GM12878 (cell line): ENCODE measurements at regions of chr18 and their contacts with region 1.

Region 1: GRCh38 chr18:45212181-45213039 is 402.9 kb upstream of the SLC14A2 start:
- DNase-seq: peak; percentile 58
- ATAC-seq: peak; percentile 100
- H3K4me3 ChIP-seq: no peak overlapping the region
- H3K27ac ChIP-seq: no peak overlapping the region
- H3K4me1 ChIP-seq: no peaks in the 10 kb centered on the region
- H3K27me3 ChIP-seq: no peaks in the 10 kb centered on the region
- CTCF ChIP-seq: peak; percentile 99 to 100 (median 99); a peak in 5 of 6 replicates
- EP300 ChIP-seq: no peak
- POLR2A ChIP-seq: no peak
- RAD21 ChIP-seq: peak; percentile 96

Region 2: DNA sequence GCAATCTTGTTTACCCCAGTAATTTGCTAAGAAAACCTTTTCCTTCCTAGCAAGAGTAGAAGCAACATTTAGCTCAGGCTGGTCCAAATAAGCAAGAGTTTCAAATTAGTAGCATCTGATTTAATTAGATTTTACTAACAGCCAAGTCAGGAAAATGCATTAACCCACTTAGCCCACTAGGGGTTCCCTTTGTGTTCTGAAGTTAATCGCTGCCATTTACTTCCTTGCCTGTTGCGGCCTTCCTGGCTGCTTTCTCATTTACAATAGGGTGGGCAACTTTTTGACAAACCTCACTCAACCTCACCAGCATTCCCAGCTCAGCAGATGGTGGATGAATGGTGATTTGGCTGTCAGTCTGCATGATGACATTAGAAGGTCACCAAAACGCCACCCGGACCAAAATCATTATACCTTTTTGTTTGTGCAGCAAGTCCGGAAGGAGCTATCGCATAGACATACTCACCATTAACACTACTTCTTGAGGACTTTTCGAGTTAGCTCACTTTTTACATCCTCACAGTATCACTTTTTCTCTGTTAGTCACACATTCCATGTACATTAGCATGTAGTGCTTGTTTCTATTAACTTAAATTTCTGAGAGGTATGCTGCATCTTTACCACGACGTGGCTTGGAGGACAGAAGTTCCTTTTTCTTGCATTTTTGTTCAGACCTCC is 633.2 kb before region 1 on chr18:
- CTCF ChIA-PET with region 1: interaction called, 26 read pairs
- POLR2A ChIA-PET with region 1: no interaction called
- RAD21 ChIA-PET with region 1: interaction called, 3 read pairs
- SMC1A ChIA-PET with region 1: interaction called, 3 read pairs
- in situ Hi-C with region 1: no loop called
- intact Hi-C with region 1: loop called (anchors 2 kb)
- DNase-seq: no peak
- ATAC-seq: peak; percentile 65; the same call in 2 of the 3 replicates
- H3K4me3 ChIP-seq: no peak overlapping the region
- H3K27ac ChIP-seq: no peak overlapping the region
- H3K4me1 ChIP-seq: no peaks in the 10 kb centered on the region
- H3K27me3 ChIP-seq: 0 out of 4 replicates have a peak, but pooled peaks cover 0 to 1% of the 10 kb centered on the region in 2 experiments
- CTCF ChIP-seq: peak; percentile 63 to 78 (median 67); a peak in 5 of 6 replicates
- EP300 ChIP-seq: no peak
- POLR2A ChIP-seq: no peak
- RAD21 ChIP-seq: peak; percentile 68

Region 3: GRCh38 chr18:44895176-44895798 is 317.1 kb before region 1 on chr18:
- CTCF ChIA-PET with region 1: interaction called, 49 read pairs
- POLR2A ChIA-PET with region 1: no interaction called
- RAD21 ChIA-PET with region 1: interaction called, 31 read pairs
- SMC1A ChIA-PET with region 1: interaction called, 10 read pairs
- in situ Hi-C with region 1: loop called (anchors 5 kb)
- intact Hi-C with region 1: no loop called
- DNase-seq: peak; percentile 53
- ATAC-seq: peak; percentile 86
- H3K4me3 ChIP-seq: no peak overlapping the region
- H3K27ac ChIP-seq: no peak overlapping the region
- H3K4me1 ChIP-seq: no peaks in the 10 kb centered on the region
- H3K27me3 ChIP-seq: no peaks in the 10 kb centered on the region
- CTCF ChIP-seq: peak; percentile 44 to 56 (median 48); a peak in 4 of 6 replicates
- EP300 ChIP-seq: no peak
- POLR2A ChIP-seq: no peak
- RAD21 ChIP-seq: peak; percentile 61

Region 4: GRCh38 chr18:44979748-44980147 is 232.7 kb before region 1 on chr18:
- CTCF ChIA-PET with region 1: interaction called, 5 read pairs
- POLR2A ChIA-PET with region 1: no interaction called
- RAD21 ChIA-PET with region 1: interaction called, 3 read pairs
- SMC1A ChIA-PET with region 1: interaction called, 3 read pairs
- in situ Hi-C with region 1: no loop called
- intact Hi-C with region 1: loop called (anchors 5 kb)
- DNase-seq: no peak
- ATAC-seq: no peak
- H3K4me3 ChIP-seq: no peak overlapping the region
- H3K27ac ChIP-seq: no peak overlapping the region
- H3K4me1 ChIP-seq: no peaks in the 10 kb centered on the region
- H3K27me3 ChIP-seq: no peaks in the 10 kb centered on the region
- CTCF ChIP-seq: no peak
- EP300 ChIP-seq: no peak
- POLR2A ChIP-seq: no peak
- RAD21 ChIP-seq: no peak

Region 5: GRCh38 chr18:45090526-45091140 is 121.8 kb before region 1 on chr18:
- CTCF ChIA-PET with region 1: interaction called, 19 read pairs
- POLR2A ChIA-PET with region 1: no interaction called
- RAD21 ChIA-PET with region 1: interaction called, 13 read pairs
- SMC1A ChIA-PET with region 1: interaction called, 21 read pairs
- in situ Hi-C with region 1: no loop called
- intact Hi-C with region 1: no loop called
- DNase-seq: no peak
- ATAC-seq: no peak
- H3K4me3 ChIP-seq: no peak overlapping the region
- H3K27ac ChIP-seq: no peak overlapping the region
- H3K4me1 ChIP-seq: no peaks in the 10 kb centered on the region
- H3K27me3 ChIP-seq: no peaks in the 10 kb centered on the region
- CTCF ChIP-seq: no peak
- EP300 ChIP-seq: no peak
- POLR2A ChIP-seq: no peak
- RAD21 ChIP-seq: no peak

Region 6: GRCh38 chr18:45384137-45384961 is 171.9 kb after region 1 on chr18:
- CTCF ChIA-PET with region 1: interaction called, 3 read pairs
- POLR2A ChIA-PET with region 1: no interaction called
- RAD21 ChIA-PET with region 1: no interaction called
- SMC1A ChIA-PET with region 1: interaction called, 4 read pairs
- in situ Hi-C with region 1: no loop called
- intact Hi-C with region 1: loop called (anchors 5 kb)
- DNase-seq: peak; percentile 8
- ATAC-seq: peak; percentile 87
- H3K4me3 ChIP-seq: no peak overlapping the region
- H3K27ac ChIP-seq: no peak overlapping the region
- H3K4me1 ChIP-seq: no peaks in the 10 kb centered on the region
- H3K27me3 ChIP-seq: peaks cover 0 to 2% of the 10 kb centered on the region in 2 experiments; a peak in 1 of 4 replicates
- CTCF ChIP-seq: peak; percentile 51 to 72 (median 67); a peak in 5 of 6 replicates
- EP300 ChIP-seq: no peak
- POLR2A ChIP-seq: no peak
- RAD21 ChIP-seq: peak; percentile 83

Region 7: GRCh38 chr18:45526114-45526841 is 313.9 kb after region 1 on chr18:
- CTCF ChIA-PET with region 1: no interaction called
- POLR2A ChIA-PET with region 1: no interaction called
- RAD21 ChIA-PET with region 1: no interaction called
- SMC1A ChIA-PET with region 1: no interaction called
- in situ Hi-C with region 1: no loop called
- intact Hi-C with region 1: no loop called
- DNase-seq: no peak
- ATAC-seq: no peak
- H3K4me3 ChIP-seq: no peak overlapping the region
- H3K27ac ChIP-seq: no peak overlapping the region
- H3K4me1 ChIP-seq: no peaks in the 10 kb centered on the region
- H3K27me3 ChIP-seq: no peaks in the 10 kb centered on the region
- CTCF ChIP-seq: no peak
- EP300 ChIP-seq: no peak
- POLR2A ChIP-seq: no peak
- RAD21 ChIP-seq: no peak